Activated T-helper 1 cell treated with anti-CD3 and anti-CD28 coated beads, Interleukin-12 subunit alpha, Interleukin-12 subunit beta, Interleukin-2, Interleukin-4 antibody, amounts not matched to agents 30 ng/mL and 10 ng/mL and 1 ng/mL, durations not matched to agents 14 hours and 24 hours and 36 hours (primary cell): ENCODE measurements at regions of chr5 and their contacts with region 1.

Region 1: DNA sequence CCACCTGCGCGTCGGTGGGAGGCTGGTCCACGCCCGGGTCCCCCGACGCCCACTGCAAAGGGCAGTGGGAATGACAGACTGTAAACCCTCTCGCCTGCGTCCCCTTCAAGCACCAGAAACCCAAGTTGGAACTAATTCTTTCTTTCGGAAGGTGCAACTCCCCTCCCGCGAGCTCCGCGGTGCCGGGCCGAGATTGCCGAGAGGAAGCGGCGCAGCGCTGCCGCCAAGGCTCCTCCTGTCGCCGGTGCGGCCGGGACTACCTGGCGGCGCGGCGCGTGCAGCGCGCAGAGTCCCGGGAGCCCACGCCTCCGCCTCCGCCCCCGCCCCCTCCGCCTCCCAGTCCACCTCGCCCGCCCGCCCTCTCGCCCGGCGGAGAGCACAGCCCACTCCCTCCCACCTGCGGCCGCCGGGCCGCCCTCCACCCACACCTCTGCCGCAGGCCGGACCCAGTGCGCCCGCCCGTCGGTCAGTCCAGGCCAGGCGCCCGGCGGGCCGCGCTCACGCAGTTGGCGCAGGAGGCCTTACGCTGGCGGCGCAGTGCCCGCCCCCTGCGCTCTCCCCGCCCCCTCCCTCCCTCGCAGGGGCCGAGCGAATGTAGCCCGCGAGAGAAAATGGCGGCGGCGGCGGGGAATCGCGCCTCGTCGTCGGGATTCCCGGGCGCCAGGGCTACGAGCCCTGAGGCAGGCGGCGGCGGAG is at the start of gene MAP3K1:
- DNase-seq: peak; percentile 72
- H3K4me3 Mint-ChIP-seq: peak within 1 kb of the TSS; percentile 91
- H3K27ac Mint-ChIP-seq: peak within 1 kb of the TSS; percentile 82
- H3K4me1 Mint-ChIP-seq: peaks cover 48% of the 10 kb centered on the region
- H3K27me3 Mint-ChIP-seq: peaks cover 2% of the 10 kb centered on the region
- total RNA-seq, gene MAP3K1: 23.6 and 25.3 TPM in 2 replicates

Region 2: GRCh38 chr5:55982957-55983381 is 832.1 kb before region 1 on chr5:
- intact Hi-C with region 1: loop called (anchors 5 kb)
- DNase-seq: no peak
- H3K4me3 Mint-ChIP-seq: peak overlapping the region; percentile 56
- H3K27ac Mint-ChIP-seq: peak overlapping the region; percentile 51
- H3K4me1 Mint-ChIP-seq: peaks cover 81% of the 10 kb centered on the region
- H3K27me3 Mint-ChIP-seq: no peaks in the 10 kb centered on the region

Region 3: GRCh38 chr5:56610093-56610698 is 204.9 kb before region 1 on chr5:
- intact Hi-C with region 1: loop called (anchors 2 kb)
- DNase-seq: peak; percentile 49
- H3K4me3 Mint-ChIP-seq: peak overlapping the region; percentile 48
- H3K27ac Mint-ChIP-seq: peak overlapping the region; percentile 81
- H3K4me1 Mint-ChIP-seq: peaks cover 89% of the 10 kb centered on the region
- H3K27me3 Mint-ChIP-seq: peaks cover 3% of the 10 kb centered on the region

Region 4: DNA sequence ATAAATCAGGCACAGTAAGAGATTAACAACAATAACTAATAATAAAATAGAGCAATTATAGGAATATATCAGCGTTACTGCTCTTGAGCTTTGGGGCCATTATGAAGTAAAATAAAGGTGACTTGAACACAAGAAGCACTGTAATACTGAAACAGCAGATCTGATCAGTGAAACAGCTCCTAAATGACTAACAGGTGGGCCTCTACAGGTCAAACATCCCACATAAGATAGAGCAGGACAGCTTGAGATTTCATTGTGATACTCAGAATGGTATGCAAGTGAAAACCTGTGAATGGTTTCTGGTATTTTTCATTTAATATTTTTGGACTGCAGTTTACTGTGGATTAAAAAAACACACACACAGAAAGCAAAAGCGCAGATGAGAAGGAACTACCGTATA is 23.7 kb before region 1 on chr5:
- intact Hi-C with region 1: no loop called
- DNase-seq: no peak
- H3K4me3 Mint-ChIP-seq: no peak overlapping the region
- H3K27ac Mint-ChIP-seq: no peak overlapping the region
- H3K4me1 Mint-ChIP-seq: peaks cover 7% of the 10 kb centered on the region
- H3K27me3 Mint-ChIP-seq: peaks cover 2% of the 10 kb centered on the region

Region 5: DNA sequence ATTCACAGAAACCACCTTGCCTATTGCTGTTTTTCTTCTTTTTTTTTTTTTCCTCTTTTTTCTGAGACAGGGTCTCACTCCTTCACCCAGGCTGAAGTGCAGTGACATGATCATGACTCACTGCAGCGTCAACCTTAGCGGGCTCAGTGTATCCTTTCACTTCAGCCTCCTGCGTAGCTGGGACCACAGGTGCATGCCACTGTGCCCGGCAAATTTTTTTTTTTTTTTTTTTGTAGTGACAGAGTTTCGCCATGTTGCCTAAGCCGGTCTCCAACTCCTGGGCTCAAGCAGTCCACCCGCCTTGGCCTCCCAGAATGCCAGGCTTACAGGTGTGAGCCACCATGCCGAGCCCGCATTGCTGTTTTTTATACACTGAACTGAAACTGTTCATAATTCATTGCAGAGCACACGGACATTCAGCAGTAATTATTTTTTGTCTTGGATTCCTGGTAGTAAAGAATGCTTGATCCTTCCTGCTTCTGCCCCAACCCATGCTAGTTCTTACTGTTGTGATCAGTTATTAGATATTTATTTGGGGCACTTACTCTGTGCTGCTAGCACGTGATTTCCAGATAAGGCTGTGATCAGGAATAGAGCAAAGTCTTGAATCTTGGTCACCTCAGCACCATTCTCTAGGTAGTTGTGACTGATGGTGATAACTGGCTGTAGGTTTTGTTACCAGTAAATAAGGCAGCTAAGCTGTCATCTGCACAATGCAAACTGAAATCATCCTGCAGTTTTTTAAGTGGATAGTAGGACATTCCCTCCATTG is 14.2 kb after region 1 on chr5:
- intact Hi-C with region 1: loop called (anchors 1 kb)
- DNase-seq: peak; percentile 44
- H3K4me3 Mint-ChIP-seq: peak overlapping the region; percentile 79
- H3K27ac Mint-ChIP-seq: peak overlapping the region; percentile 0
- H3K4me1 Mint-ChIP-seq: peaks cover 93% of the 10 kb centered on the region
- H3K27me3 Mint-ChIP-seq: no peaks in the 10 kb centered on the region

Region 6: DNA sequence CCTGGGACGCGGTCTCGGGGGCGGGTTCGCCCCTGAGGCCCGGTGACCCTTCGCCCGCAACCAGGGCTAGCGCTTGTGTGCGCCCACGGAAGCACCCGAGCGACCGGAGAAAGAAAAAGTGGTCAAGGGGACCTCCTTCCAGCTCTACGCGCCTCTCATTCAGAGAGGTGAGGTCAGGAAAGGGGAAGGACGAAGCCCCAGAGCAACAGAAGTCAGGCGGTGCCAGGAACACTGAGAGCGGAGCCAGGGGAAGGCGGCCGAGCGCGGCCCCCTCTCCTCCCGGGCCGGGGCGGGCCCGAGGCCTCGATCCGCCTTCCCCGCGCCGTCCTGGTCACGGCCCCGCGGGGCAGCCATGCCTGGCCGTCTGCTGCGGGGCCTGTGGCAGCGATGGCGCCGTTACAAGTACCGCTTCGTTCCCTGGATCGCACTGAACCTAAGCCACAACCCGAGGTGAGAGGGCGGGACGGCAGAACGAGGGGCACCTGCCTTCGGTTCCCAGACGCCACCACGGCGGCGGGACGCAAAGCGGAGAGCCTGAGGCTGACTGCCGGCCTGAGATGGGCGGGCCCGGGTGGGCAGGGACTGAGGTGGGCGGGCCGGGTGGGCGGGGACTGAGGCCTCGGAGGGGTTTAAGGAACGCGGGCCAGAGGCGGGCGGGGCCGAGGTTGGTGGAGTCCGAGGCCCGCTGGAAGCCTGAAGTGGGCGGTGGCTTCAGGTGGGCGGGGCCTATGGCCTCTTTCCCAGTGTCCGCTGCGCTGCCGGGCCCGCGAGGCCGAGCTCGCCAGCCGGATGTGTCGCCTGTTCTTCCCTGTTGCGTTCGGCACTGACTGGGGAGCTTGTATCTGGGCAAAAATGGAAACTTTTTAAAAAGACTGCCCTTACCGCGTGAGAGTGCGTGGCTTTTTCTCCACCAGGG is 94.4 kb after region 1 on chr5 and contains the start of gene SETD9:
- intact Hi-C with region 1: loop called (anchors 2 kb)
- DNase-seq: peak; percentile 90
- H3K4me3 Mint-ChIP-seq: peak within 1 kb of the TSS; percentile 90
- H3K27ac Mint-ChIP-seq: peak within 1 kb of the TSS; percentile 95
- H3K4me1 Mint-ChIP-seq: peaks cover 25% of the 10 kb centered on the region
- H3K27me3 Mint-ChIP-seq: peaks cover 19% of the 10 kb centered on the region
- total RNA-seq, gene SETD9: 13.6 and 14.9 TPM in 2 replicates